A673 (cell line): ENCODE measurements at regions of chr3 and their contacts with region 1.

Region 1: DNA sequence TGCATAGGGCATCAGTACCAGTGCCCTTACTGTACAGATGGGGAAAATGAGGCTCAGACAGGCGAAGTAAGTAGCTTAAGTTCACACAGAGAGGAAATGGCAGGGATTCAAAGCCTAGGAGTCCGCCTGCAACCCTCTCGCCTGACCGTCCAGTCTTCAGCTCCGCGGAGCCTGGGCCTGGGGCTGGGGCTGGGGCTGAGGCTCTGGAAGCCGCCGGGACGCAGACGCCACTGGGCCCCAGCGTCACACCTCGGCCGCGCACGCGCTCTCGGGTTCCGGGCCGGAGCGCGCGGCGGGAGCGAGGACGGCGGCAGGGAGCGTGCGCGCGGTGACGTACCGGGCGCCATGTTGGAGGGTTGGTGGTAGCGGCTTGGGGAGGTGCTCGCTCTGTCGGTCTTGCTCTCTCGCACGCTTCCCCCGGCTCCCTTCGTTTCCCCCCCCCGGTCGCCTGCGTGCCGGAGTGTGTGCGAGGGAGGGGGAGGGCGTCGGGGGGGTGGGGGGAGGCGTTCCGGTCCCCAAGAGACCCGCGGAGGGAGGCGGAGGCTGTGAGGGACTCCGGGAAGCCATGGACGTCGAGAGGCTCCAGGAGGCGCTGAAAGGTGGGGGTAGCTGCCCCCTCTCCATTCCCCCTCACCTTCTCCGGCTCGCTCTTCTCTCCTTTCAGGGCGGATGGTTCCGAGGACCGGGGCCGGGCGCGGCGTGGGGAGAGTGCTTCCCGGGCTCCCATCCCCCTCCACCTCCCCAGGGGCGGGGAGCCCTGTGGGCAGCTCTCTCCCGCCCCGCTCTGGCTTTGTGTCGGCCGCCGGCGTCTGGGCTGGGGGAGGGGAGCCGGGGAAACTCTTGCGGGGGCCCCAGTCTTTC is at the start of gene PPP4R2:
- DNase-seq: peak; percentile 86
- H3K4me3 ChIP-seq: peak within 1 kb of the TSS; percentile 76
- H3K27ac ChIP-seq: peak within 1 kb of the TSS; percentile 83
- H3K4me1 ChIP-seq: peaks cover 17% of the 10 kb centered on the region
- H3K27me3 ChIP-seq: no peaks in the 10 kb centered on the region
- CTCF ChIP-seq: no peak
- total RNA-seq, gene PPP4R2: 41.4 and 51.0 TPM in 2 replicates

Region 2: DNA sequence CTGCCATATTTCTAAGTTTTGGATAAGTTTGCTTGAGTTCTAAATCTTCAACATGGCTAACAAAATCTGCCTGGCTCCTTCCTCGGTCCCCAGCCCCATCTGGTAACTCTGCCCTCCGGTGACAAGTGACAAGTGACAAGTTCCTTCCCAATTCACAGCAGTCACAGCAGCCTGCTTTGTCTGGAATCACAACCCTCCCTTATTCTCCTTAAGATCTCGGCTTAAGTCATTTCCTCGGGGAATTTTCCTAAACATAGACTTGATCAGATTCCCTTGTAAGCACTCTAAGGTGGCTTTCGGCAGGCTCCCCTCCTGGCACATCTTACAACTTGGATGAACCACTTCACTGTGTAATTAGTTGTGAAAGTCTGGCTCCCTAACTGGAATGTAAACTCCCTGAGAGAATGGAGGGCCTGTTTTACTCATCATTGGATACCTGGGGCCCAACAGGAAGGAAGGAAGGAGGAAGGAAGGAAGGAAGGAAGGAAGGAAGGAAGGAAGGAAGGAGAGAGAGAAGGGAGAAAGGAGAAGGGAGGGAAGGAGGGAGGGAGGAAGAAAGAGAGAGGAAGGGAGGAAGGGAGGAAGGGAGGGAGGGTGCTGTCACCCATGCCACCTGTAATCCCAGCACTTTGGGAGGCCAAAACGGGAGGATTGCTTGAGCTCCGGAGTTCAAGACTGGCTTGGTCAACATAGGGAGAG is 274.9 kb before region 1 on chr3:
- CTCF ChIA-PET with region 1: no interaction called
- POLR2A ChIA-PET with region 1: no interaction called
- intact Hi-C with region 1: no loop called
- DNase-seq: peak; percentile 91
- H3K4me3 ChIP-seq: no peak overlapping the region
- H3K27ac ChIP-seq: peak overlapping the region; percentile 79
- H3K4me1 ChIP-seq: peaks cover 26% of the 10 kb centered on the region
- H3K27me3 ChIP-seq: no peaks in the 10 kb centered on the region
- CTCF ChIP-seq: no peak

Region 3: DNA sequence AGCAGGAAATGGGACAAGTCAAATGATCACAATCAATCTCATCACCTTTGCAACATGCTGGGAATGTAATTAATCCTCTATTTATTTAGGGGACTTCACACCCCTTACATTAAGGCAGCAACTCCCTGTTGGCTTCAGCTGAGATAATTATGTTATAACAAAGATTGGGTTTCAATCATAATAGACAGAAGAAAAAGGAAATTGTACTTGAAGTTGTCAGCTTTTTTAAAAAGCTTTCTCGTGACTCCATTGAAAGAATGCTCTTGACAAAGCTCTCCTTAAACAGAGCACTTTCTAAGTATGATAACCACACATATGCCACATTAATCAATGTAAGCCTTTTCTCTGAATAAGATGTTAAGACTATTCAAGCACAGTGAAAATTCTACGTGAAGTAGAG is 214.2 kb before region 1 on chr3:
- CTCF ChIA-PET with region 1: no interaction called
- POLR2A ChIA-PET with region 1: no interaction called
- intact Hi-C with region 1: no loop called
- DNase-seq: peak; percentile 21
- H3K4me3 ChIP-seq: no peak overlapping the region
- H3K27ac ChIP-seq: no peak overlapping the region
- H3K4me1 ChIP-seq: peaks cover 25% of the 10 kb centered on the region
- H3K27me3 ChIP-seq: no peaks in the 10 kb centered on the region
- CTCF ChIP-seq: no peak

Region 4: GRCh38 chr3:73045391-73045790 is 48.7 kb after region 1 on chr3:
- CTCF ChIA-PET with region 1: no interaction called
- POLR2A ChIA-PET with region 1: no interaction called
- intact Hi-C with region 1: loop called (anchors 5 kb)
- DNase-seq: no peak
- H3K4me3 ChIP-seq: no peak overlapping the region
- H3K27ac ChIP-seq: no peak overlapping the region
- H3K4me1 ChIP-seq: peaks cover 6% of the 10 kb centered on the region
- H3K27me3 ChIP-seq: no peaks in the 10 kb centered on the region
- CTCF ChIP-seq: no peak